GM10248 (cell line): ENCODE measurements at regions of chr1 and their contacts with region 1.

Region 1: GRCh38 chr1:206725109-206725963 is 40.6 kb downstream of the MAPKAPK2 start:
- DNase-seq: peak; percentile 71
- CTCF ChIP-seq: peak; percentile 75

Region 2: DNA sequence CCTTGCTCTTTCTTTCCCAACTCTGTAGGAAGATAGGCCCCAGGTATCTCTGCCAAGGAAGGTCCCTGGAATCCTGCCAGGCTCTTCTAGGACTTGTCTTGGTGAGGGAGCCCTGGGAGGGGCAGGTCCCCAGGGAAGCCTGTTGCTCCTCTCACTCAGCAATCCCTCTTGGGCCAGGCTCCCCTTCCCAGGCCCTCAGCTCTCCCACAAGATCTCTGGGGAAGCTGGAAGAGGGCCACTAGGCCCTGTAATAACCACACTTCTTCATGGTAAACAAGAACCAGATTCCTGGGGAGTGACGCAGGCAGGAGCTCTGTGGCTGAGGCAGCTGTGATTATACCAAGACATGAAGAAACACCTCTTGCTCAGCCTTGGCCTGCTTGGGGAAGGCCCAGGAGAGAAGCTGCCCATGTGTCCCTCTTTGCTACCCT is 50.6 kb before region 1 on chr1:
- CTCF ChIA-PET with region 1: interaction called, 13 read pairs
- POLR2A ChIA-PET with region 1: no interaction called
- DNase-seq: no peak
- CTCF ChIP-seq: no peak

Region 3: DNA sequence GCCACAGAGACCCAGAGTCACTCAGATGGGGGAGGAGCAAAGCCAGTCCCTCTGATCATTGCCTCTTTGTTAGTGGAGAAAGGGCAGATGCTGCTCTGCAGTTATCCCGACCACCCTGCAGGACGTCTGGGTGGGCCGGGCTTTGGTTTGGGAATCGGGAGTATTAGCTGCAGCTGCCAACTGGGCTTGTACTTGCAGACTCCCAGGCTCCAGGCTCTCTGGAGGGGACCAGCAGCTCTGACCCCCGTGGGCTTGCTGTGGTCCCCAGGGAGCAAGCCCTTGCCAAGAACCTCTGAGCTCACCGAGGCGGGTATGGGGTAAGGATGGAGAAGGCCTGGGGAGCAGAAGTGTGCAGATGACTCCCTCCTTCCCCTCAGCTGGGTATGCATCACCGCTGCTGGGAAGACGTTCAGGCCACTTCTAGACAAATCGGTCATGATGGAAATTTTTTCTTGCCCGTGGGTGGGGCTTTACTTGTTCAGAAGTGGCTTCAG is 19.0 kb before region 1 on chr1:
- CTCF ChIA-PET with region 1: interaction called, 87 read pairs
- POLR2A ChIA-PET with region 1: interaction called, 3 read pairs
- DNase-seq: no peak
- CTCF ChIP-seq: no peak

Region 4: GRCh38 chr1:206761159-206761768 is 35.9 kb after region 1 on chr1:
- CTCF ChIA-PET with region 1: interaction called, 60 read pairs
- POLR2A ChIA-PET with region 1: no interaction called
- DNase-seq: no peak
- CTCF ChIP-seq: no peak

Region 5: GRCh38 chr1:206808615-206809014 is 83.3 kb after region 1 on chr1:
- CTCF ChIA-PET with region 1: interaction called, 464 read pairs
- POLR2A ChIA-PET with region 1: no interaction called
- DNase-seq: no peak
- CTCF ChIP-seq: peak; percentile 76

Region 6: DNA sequence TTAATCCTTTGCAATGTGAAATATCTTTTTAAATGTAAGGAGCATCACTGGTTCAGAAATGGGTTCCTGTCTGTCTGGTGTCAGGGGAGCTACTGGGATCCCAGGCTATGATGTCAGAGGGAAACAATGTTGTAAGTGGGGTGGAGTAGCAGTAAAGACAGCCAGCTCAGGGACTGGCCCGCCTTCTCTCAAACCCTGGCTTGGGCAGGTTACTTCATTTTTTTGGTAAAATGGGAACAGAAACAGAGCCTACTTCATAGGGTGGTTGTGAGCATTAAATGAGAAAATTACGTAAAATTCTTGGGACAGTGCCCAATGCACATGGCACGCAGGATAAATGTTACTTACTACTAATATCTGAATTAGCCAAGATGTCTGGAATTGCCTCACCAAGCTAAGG is 109.4 kb after region 1 on chr1:
- CTCF ChIA-PET with region 1: interaction called, 14 read pairs
- POLR2A ChIA-PET with region 1: no interaction called
- DNase-seq: no peak
- CTCF ChIP-seq: no peak

Region 7: DNA sequence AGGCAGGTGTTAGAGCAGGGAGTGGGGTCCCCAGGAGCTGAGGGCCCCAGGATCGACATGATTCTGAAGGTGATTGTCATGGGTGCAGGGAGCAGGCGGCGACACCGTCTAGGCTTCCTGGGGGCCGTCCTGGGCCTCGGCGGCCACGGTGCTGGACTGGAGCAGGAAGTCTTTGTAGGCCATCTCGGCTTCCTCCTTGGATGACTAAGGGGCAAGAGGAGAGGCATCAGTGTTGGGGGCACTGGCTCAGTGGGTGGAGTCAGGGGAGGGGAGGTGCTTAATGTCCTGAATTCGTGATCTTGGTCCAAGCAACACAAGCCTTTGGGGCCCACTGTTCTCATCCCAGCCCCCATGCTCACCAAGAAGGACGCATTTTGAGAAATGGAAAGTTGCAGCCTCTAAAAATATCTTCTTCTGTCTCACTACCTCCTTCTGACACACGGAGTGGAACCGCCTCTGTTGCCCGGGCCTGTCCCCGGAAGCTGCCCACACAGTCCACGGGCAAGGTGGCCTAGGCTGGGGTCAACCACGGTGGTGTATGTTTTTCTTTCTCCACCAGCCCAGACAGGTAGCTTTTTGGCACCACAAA is 205.0 kb after region 1 on chr1:
- CTCF ChIA-PET with region 1: interaction called, 12 read pairs
- POLR2A ChIA-PET with region 1: no interaction called
- DNase-seq: peak; percentile 85
- CTCF ChIP-seq: no peak